ENCODE measurements at regions of chr1 and their contacts with region 1.

Region 1: GRCh38 chr1:100265931-100266740 is at the start of gene RTCA:
- H3K4me3 Mint-ChIP-seq: peak within 1 kb of the TSS; percentile 100
- H3K27ac Mint-ChIP-seq: peak within 1 kb of the TSS; percentile 99
- H3K4me1 Mint-ChIP-seq: peaks cover 35% of the 10 kb centered on the region
- H3K27me3 Mint-ChIP-seq: no peaks in the 10 kb centered on the region

Region 2: DNA sequence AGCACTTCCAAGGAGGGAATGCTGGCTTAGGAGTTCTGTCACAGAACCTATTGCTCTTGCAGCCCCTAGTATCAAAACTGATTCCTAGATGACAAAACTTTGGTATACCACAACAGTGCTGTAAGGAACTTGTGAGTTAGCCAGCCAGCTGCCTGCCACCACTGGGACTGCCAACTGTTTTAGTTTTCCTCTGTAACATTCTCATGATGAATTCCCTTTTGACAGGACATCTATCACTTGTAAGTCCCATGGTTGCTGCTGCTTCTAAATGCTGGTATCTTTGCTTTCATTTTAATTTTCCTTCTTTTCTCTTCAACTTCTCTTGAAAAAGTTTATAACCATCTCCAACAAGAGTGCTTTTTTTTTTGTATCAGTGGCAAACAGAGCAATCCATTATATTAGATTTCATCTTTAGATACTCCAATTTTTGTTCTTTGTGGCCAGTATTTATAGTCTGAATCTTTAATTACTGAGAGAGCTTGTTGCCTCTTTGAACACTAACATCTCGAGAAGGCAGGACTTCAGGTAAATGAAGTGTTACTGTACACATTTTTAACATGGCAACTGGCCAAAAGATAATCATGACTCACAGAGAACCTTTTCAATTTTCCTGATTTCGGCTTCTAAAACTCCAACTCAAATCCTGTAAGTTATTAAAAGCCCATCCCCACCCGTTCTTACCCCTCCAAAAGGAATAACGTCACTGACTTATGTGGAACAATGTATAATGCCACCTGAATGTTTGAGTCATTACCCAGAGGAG is 36.3 kb before region 1 on chr1:
- intact Hi-C with region 1: no loop called
- H3K4me3 Mint-ChIP-seq: no peak overlapping the region
- H3K27ac Mint-ChIP-seq: no peak overlapping the region
- H3K4me1 Mint-ChIP-seq: peaks cover 10% of the 10 kb centered on the region
- H3K27me3 Mint-ChIP-seq: no peaks in the 10 kb centered on the region

Region 3: GRCh38 chr1:100249537-100250257 is 16.4 kb before region 1 on chr1 and contains the start of gene DBT:
- intact Hi-C with region 1: loop called (anchors 1 kb)
- H3K4me3 Mint-ChIP-seq: no peak within 1 kb of the TSS
- H3K27ac Mint-ChIP-seq: no peak within 1 kb of the TSS
- H3K4me1 Mint-ChIP-seq: peaks cover 7% of the 10 kb centered on the region
- H3K27me3 Mint-ChIP-seq: no peaks in the 10 kb centered on the region

Region 4: DNA sequence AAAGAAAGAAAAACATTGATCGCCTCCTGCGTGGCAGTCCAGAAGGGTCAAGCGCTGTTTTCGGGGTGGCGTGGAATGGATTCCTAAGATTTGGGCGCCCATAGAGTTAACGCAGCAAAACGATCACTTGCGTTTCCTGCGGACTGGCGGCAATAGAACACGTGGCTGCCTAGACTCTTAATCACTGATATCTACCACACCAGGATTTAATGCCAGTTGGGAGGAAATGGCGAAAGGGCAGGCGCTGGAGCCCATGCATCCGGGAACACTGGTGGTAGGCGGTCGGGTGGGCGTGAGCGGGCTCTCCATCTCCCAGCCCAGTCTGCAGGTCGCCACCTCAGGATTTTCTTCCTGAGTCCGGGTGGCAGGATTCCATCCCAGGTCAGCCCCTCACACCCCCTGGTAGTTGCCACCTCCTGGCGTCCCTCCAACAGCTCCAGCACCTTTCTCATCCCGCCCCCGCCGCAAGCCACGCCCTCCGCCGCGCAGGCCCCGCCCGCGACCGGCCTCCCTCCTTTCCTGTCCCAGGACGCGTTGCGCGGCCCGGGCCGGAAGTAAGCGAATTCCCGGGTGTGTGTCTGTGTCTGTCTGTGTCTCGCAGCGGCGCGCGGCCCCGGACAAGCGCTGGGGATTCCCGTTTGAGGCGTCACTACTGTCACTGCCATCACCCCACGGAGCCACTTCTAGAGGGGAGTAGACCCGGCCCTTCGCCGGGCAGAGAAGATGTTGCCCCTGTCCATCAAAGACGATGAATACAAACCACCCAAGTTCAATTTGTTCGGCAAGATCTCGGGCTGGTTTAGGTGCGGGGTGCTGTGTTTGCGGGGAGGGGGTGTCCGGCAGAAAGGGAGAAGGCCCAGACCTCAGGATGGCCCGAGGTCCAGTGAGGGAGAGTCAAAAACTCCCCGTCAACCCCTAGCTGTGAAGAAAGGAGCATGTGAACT is 629.7 kb after region 1 on chr1 and contains the start of gene SLC30A7:
- intact Hi-C with region 1: loop called (anchors 10 kb)
- H3K4me3 Mint-ChIP-seq: peak within 1 kb of the TSS; percentile 87
- H3K27ac Mint-ChIP-seq: peak within 1 kb of the TSS; percentile 100
- H3K4me1 Mint-ChIP-seq: peaks cover 12% of the 10 kb centered on the region
- H3K27me3 Mint-ChIP-seq: no peaks in the 10 kb centered on the region